PC-3 (cell line): ENCODE measurements at regions of chr15 and their contacts with region 1.

Region 1: DNA sequence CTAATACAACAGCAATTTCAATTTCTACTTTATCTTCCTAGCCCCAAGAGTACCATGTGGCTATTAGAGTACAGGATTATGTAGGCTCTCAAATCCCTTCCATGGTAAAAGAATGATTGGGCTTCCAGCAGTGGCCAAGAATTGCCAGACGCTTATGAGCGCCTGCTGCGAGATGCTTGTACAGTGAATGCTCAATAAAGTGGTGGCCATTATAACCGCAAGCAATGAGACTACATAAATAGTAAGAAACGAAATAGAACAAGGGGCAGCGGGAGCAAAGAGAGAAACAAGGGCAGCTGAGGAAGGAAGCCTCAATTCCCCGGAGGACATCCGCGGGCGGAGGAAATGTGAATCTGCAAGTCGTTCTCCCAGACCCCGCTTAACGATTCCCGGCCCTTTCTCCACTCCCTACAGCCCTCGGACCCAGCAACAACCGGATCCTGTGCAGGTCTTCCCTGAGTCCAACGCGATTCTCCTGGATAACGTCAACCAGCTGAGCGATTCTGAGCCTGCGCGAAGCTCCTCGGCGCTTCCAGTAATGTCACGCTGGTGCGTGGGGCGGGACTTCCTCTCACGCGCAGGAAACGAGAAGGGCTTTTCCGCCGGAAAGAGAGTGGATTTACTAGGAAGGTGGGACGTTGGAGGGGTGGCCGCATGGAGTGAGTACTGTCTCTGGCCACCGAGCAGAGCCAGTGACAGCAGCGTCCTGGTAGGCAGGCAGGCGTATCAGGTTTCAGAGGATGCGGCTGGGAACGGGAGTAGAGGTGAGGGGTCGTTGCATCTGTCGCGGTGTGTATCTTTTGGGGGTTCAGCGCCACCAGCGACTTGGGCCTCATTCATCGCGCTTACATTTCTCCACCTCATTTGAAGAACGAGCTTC is 40.5 kb upstream of the AP3B2 start:
- DNase-seq: peak; percentile 95
- ATAC-seq: peak; percentile 97
- H3K4me3 ChIP-seq: peak overlapping the region; percentile 92
- H3K27ac ChIP-seq: peak overlapping the region; percentile 64
- H3K4me1 ChIP-seq: peaks cover 16% of the 10 kb centered on the region
- H3K27me3 ChIP-seq: no peaks in the 10 kb centered on the region
- CTCF ChIP-seq: no peak

Region 2: DNA sequence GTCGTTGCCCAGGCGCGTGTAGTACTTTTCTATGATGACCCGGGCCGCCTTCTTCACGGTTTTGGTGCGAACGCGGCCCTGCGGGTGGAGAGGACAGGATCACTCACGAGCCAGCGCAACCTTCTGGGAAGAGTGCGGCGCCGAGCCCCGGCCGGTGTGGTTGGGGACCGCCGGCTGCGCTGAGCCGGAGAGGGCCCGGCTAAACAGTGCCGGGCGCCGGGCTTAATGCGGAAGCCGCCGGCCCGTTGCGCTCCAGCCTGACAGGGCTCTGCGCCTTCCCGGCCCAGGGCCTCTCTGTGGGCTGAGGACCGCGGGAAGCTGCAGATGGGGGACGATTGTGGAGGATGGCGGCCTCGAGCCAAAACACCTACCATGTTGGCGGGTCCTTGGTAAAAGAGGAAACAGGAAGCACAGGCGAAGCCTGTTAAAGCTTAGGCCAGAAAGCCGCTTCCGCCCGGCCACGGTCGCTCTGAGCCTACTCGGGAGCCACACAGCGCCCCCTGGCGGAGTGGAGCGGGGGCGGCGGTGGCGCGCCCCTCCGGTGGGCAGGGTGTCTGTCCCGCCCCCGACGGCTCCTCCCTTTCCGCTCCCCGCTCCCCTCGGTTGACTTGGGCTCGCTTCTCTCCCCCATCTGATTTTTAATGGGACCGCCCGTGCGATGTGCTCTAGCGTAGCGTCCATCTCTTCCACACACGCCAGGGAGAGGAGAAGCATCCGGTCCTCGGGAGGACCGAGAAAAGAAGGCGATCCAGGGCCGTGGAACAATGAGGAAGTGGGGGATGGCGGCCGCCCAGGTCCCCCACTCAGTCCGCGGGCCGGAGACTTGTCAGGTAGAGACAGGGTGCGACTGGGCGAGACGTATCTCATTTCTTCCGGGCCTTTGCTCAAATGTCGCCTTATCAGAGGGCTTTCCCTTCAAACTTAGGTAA is 209.9 kb before region 1 on chr15 and contains the start of gene RPS17:
- CTCF ChIA-PET with region 1: no interaction called
- POLR2A ChIA-PET with region 1: interaction called, 10 read pairs
- intact Hi-C with region 1: no loop called
- DNase-seq: peak; percentile 96
- ATAC-seq: peak; percentile 94
- H3K4me3 ChIP-seq: peak within 1 kb of the TSS; percentile 100
- H3K27ac ChIP-seq: peak within 1 kb of the TSS; percentile 45
- H3K4me1 ChIP-seq: peaks cover 14% of the 10 kb centered on the region
- H3K27me3 ChIP-seq: no peaks in the 10 kb centered on the region
- CTCF ChIP-seq: peak; percentile 89
- total RNA-seq, gene RPS17: 2,156 and 3,194 TPM in 2 replicates

Region 3: DNA sequence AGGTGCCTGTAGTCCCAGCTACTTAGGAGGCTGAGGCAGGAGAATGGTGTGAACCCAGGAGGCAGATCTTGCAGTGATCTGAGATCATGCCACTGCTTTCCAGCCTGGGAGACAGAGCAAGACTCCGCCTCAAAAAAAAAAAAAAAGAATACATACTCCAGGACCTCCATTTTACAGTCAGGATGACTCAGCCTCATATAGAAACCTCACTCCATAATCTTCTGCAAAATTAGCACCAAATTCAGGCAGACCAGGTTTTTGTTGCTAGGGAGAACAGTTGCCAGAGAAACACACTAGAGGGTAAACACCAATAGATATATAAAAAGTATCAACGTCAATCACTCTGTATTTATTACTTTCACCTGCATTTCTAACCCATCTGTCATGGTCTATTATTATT is 12.2 kb before region 1 on chr15:
- CTCF ChIA-PET with region 1: no interaction called
- POLR2A ChIA-PET with region 1: interaction called, 13 read pairs
- intact Hi-C with region 1: no loop called
- DNase-seq: peak; percentile 48
- ATAC-seq: peak; percentile 65
- H3K4me3 ChIP-seq: no peak overlapping the region
- H3K27ac ChIP-seq: no peak overlapping the region
- H3K4me1 ChIP-seq: peaks cover 12% of the 10 kb centered on the region
- H3K27me3 ChIP-seq: no peaks in the 10 kb centered on the region
- CTCF ChIP-seq: no peak

Region 4: DNA sequence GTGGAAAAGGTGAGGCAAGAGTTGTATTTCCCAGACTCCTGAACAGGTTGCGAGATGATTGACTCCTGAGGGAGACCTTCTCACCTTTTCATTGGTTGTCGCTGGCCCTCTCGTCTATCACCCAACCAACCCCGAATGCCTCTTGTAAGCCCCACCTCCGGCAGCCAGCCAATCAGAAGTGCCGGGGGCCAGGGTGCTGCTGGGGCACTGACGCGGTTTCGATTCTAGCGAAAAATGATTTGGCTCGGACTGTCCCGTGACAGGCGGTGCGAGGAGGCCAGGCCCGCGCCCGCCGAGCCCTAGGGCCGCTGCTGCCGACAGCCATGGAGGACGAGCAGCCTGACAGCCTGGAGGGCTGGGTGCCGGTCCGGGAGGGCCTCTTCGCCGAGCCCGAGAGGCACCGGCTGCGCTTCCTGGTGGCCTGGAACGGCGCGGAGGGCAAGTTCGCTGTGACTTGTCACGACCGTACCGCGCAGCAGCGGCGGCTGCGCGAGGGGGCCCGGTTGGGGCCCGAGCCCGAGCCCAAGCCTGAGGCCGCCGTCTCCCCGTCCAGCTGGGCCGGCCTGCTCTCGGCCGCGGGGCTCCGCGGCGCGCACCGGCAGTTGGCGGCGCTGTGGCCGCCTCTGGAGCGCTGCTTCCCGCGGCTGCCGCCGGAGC is 59.3 kb after region 1 on chr15 and contains the start of gene WHAMM:
- CTCF ChIA-PET with region 1: interaction called, 6 read pairs
- POLR2A ChIA-PET with region 1: interaction called, 3 read pairs
- intact Hi-C with region 1: loop called (anchors 5 kb)
- DNase-seq: peak; percentile 98
- ATAC-seq: peak; percentile 89
- H3K4me3 ChIP-seq: peak within 1 kb of the TSS; percentile 90
- H3K27ac ChIP-seq: peak within 1 kb of the TSS; percentile 75
- H3K4me1 ChIP-seq: peaks cover 16% of the 10 kb centered on the region
- H3K27me3 ChIP-seq: no peaks in the 10 kb centered on the region
- CTCF ChIP-seq: no peak
- total RNA-seq, gene WHAMM: 4.5 and 4.6 TPM in 2 replicates

Region 5: GRCh38 chr15:82832601-82833361 is 82.6 kb after region 1 on chr15:
- CTCF ChIA-PET with region 1: no interaction called
- POLR2A ChIA-PET with region 1: no interaction called
- intact Hi-C with region 1: loop called (anchors 2 kb)
- DNase-seq: peak; percentile 93
- ATAC-seq: peak; percentile 91
- H3K4me3 ChIP-seq: peak overlapping the region; percentile 41; the same call in 1 of the 2 replicates
- H3K27ac ChIP-seq: peak overlapping the region; percentile 87
- H3K4me1 ChIP-seq: peaks cover 22% of the 10 kb centered on the region
- H3K27me3 ChIP-seq: no peaks in the 10 kb centered on the region
- CTCF ChIP-seq: no peak; the same call in 1 of the 2 replicates